Common myeloid progenitor, CD34-positive (primary cell): ENCODE measurements at regions of chr11 and their contacts with region 1.

Region 1: DNA sequence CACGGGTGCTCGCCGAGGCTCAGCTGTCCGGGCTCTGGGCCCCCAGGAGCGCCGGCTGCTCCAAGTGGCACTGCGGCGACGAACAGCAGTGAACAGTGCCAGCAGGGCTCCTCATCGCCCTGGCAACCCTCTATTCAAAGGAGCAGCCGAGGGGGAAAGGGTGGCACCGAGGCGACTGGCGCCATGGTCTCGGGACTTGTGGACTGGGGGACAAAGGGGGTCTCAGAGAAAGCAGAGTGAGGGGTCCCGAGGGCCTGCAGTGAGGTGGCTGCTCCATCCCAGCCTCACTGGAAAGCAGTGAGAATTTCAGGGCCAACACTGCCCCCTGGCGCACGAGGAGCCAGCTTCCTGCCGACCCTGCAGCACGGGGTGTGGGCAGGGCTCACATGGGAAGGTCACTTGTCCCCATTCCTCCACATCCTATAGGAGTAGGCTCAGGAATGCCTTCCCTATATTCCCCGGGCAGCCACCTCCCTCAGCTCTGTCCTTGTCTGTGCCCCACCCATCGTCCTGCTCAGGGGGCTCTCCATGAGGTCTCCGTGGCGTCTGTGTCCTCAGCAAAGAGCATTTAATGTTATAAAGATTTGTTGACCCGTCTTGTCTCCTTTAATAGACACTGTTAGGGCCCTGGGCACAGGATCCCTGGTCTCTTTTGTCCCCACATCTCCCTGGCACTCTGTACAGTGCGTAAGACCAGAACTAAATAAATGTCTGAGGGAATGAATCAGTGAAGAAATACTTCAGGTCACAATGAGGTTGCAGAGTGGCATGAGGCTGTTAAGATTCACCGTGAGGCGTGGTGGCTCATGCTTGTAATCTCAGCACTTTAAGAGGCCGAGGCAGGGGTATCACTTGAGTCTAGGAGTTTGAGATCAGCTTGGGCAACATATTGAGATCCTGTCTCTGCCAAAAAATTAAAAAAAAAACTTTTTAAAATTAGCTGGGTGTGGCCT is 26.4 kb downstream of the LRFN4 start:
- DNase-seq: peak; percentile 39 to 63 (median 51)
- H3K4me3 ChIP-seq: no peak overlapping the region
- H3K27ac ChIP-seq: no peak overlapping the region
- H3K4me1 ChIP-seq: peaks cover 9 to 18% (median 17%) of the 10 kb centered on the region in 4 experiments
- H3K27me3 ChIP-seq: no peaks in the 10 kb centered on the region

Region 2: GRCh38 chr11:66855574-66856495 is 27.5 kb before region 1 on chr11:
- CTCF ChIA-PET with region 1: interaction called, 10 read pairs
- POLR2A ChIA-PET with region 1: no interaction called
- DNase-seq: peak; percentile 80 to 84 (median 82)
- H3K4me3 ChIP-seq: peak overlapping the region; percentile 50 to 86 (median 71)
- H3K27ac ChIP-seq: peak overlapping the region; percentile 50 to 79
- H3K4me1 ChIP-seq: peaks cover 0 to 33% (median 25%) of the 10 kb centered on the region in 4 experiments
- H3K27me3 ChIP-seq: no peaks in the 10 kb centered on the region

Region 3: GRCh38 chr11:66868726-66869566 is 14.3 kb before region 1 on chr11:
- CTCF ChIA-PET with region 1: interaction called, 22 read pairs
- POLR2A ChIA-PET with region 1: no interaction called
- DNase-seq: peak; percentile 85 to 91 (median 90)
- H3K4me3 ChIP-seq: peak overlapping the region in 3 of 7 experiments; percentile 3 to 36 (median 19)
- H3K27ac ChIP-seq: no peak overlapping the region
- H3K4me1 ChIP-seq: peaks cover 0 to 7% (median 5%) of the 10 kb centered on the region in 4 experiments
- H3K27me3 ChIP-seq: no peaks in the 10 kb centered on the region

Region 4: GRCh38 chr11:66967670-66968425 is 84.6 kb after region 1 on chr11:
- CTCF ChIA-PET with region 1: no interaction called
- POLR2A ChIA-PET with region 1: no interaction called
- DNase-seq: no peak
- H3K4me3 ChIP-seq: no peak overlapping the region
- H3K27ac ChIP-seq: no peak overlapping the region
- H3K4me1 ChIP-seq: peaks cover 0 to 5% (median 1%) of the 10 kb centered on the region in 4 experiments
- H3K27me3 ChIP-seq: peaks cover 0 to 7% (median 6%) of the 10 kb centered on the region in 5 experiments